CD8-positive, alpha-beta T cell (primary cell): ENCODE measurements at regions of chr2 and their contacts with region 1.

Region 1: GRCh38 chr2:100610381-100610831 is 47.6 kb downstream of the PDCL3 start:
- DNase-seq: peak; percentile 72 to 88 (median 79)
- ATAC-seq: peak; percentile 95
- H3K4me3 ChIP-seq: no peak overlapping the region
- H3K4me3 Mint-ChIP-seq: no peak overlapping the region
- H3K27ac ChIP-seq: no peak overlapping the region
- H3K27ac Mint-ChIP-seq: no peak overlapping the region
- H3K4me1 ChIP-seq: no peaks in the 10 kb centered on the region
- H3K4me1 Mint-ChIP-seq: peaks cover 5% of the 10 kb centered on the region
- H3K27me3 ChIP-seq: no peaks in the 10 kb centered on the region
- H3K27me3 Mint-ChIP-seq: peaks cover 2% of the 10 kb centered on the region
- CTCF ChIP-seq: peak; percentile 75

Region 2: DNA sequence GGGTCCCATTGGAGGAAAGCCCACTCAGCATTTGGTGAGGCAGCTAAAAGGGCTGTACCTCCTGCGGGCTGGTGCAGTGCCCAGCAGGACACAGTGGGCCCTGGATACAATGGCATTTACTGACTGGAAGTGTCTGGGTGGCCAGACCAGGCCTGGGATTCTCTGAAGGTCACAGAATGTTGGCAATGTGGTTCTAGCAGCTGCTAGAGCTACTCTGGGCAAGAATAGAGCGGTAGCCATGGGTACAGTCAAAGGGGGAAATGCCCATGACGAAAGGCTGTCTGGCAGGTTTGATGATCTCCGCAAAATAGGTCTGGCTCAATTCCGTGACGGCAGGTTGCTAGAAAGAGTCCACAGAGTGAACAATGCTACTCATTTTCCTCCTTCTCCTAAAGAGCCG is 709.9 kb before region 1 on chr2:
- CTCF ChIA-PET with region 1: no interaction called
- POLR2A ChIA-PET with region 1: no interaction called
- intact Hi-C with region 1: no loop called
- DNase-seq: no peak
- ATAC-seq: no peak
- H3K4me3 ChIP-seq: no peak overlapping the region
- H3K4me3 Mint-ChIP-seq: no peak overlapping the region
- H3K27ac ChIP-seq: no peak overlapping the region
- H3K27ac Mint-ChIP-seq: no peak overlapping the region
- H3K4me1 ChIP-seq: no peaks in the 10 kb centered on the region
- H3K4me1 Mint-ChIP-seq: no peaks in the 10 kb centered on the region
- H3K27me3 ChIP-seq: no peaks in the 10 kb centered on the region
- H3K27me3 Mint-ChIP-seq: no peaks in the 10 kb centered on the region
- CTCF ChIP-seq: no peak

Region 3: DNA sequence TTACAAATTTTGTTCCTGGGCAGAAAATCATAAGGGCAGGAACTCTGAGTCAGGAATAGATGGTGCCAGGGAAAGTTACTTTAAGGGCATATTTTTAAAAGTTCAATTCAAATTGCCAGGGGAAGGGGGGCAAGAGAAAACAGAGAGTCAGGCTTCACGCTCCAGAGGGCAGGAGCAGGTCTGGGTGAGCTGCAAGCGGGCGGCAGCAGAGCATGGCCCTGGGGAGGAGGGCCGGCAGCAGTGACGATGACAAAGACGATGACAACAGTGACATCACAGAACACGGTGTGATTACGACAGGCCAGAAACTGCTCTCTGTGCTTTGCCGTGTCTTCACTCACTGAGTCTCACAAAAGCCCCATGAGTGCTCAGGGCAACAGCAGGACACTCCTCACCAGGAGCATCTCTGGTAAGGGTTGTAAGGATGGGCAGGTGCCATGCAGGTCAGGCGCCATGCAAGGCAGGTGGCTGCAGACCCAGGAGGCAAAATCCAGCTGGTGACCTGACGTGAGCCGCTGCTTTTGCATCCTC is 216.2 kb before region 1 on chr2:
- CTCF ChIA-PET with region 1: no interaction called
- POLR2A ChIA-PET with region 1: no interaction called
- intact Hi-C with region 1: no loop called
- DNase-seq: peak in 2 of 9 experiments; percentile 25 to 35
- ATAC-seq: no peak
- H3K4me3 ChIP-seq: no peak overlapping the region
- H3K4me3 Mint-ChIP-seq: no peak overlapping the region
- H3K27ac ChIP-seq: no peak overlapping the region
- H3K27ac Mint-ChIP-seq: no peak overlapping the region
- H3K4me1 ChIP-seq: no peaks in the 10 kb centered on the region
- H3K4me1 Mint-ChIP-seq: no peaks in the 10 kb centered on the region
- H3K27me3 ChIP-seq: no peaks in the 10 kb centered on the region
- H3K27me3 Mint-ChIP-seq: no peaks in the 10 kb centered on the region
- CTCF ChIP-seq: no peak

Region 4: DNA sequence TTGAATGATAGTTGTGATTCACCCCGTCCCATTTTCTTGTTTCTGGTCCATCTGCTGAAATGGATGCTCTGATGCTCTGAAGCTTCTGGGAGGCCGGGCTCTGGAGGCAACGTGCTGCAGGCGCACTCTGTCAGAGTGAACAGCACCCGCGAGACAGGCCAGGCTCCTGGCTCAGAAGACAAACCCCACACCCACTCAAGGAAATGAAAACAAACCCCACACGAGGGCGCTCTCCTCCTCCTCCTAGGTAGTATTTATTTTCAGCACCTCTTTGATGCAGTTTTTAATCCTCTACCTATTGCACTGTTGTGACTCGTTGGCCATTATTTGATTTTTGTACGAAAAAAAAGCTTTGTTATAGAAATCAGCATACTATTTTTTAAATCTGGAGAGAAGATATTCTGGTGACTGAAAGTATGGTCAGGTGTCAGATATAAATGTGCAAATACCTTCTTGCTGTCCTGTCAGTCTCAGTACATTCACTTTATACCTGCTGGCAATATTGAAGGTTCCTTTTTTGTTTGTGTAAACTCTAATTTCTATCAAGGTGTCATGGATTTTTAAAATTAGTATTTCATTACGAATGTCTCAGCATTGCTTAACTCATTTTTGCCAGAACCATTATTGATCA is 182.7 kb before region 1 on chr2:
- CTCF ChIA-PET with region 1: no interaction called
- POLR2A ChIA-PET with region 1: no interaction called
- intact Hi-C with region 1: loop called in 1 of 2 experiments (anchors 10 kb)
- DNase-seq: peak; percentile 39 to 77 (median 70)
- ATAC-seq: peak; percentile 83
- H3K4me3 ChIP-seq: no peak overlapping the region
- H3K4me3 Mint-ChIP-seq: no peak overlapping the region
- H3K27ac ChIP-seq: no peak overlapping the region
- H3K27ac Mint-ChIP-seq: no peak overlapping the region
- H3K4me1 ChIP-seq: no peaks in the 10 kb centered on the region
- H3K4me1 Mint-ChIP-seq: peaks cover 4% of the 10 kb centered on the region
- H3K27me3 ChIP-seq: no peaks in the 10 kb centered on the region
- H3K27me3 Mint-ChIP-seq: peaks cover 15% of the 10 kb centered on the region
- CTCF ChIP-seq: peak; percentile 61

Region 5: DNA sequence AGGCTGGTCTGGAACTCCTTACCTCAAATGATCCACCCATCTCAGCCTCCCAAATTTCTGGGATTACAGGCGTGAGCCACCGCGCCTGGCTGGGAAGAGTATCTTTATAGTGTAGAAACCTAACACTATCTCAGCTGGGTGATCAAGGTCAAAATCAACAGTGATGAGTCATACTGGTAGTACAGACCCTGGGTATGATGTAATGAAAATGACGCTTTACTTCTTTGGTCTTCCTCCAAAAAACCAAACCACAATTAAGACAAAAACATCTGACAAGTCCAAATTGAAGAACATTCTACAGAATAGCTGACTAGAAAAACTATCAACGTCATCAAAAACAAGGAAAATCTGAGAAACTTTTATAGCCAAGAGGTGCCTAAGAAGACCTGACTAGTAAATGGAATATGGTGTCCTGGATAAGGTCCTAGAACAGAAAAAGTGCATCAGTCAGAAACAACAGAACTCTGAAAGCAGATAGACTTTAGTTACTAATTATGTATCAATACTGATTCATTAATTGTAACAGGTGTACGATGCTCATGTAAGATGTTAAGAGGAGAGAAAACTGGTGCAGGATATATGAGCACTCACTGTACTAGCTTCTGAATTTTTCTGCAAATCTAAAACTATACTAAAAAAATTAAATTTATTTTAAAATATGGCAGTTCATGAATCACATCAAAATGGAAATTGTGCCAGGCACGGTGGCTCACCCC is 22.2 kb before region 1 on chr2:
- CTCF ChIA-PET with region 1: interaction called, 42 read pairs
- POLR2A ChIA-PET with region 1: no interaction called
- intact Hi-C with region 1: no loop called
- DNase-seq: peak in 5 of 9 experiments; percentile 18 to 89 (median 34)
- ATAC-seq: peak; percentile 88
- H3K4me3 ChIP-seq: no peak overlapping the region
- H3K4me3 Mint-ChIP-seq: no peak overlapping the region
- H3K27ac ChIP-seq: no peak overlapping the region
- H3K27ac Mint-ChIP-seq: peak overlapping the region; percentile 78
- H3K4me1 ChIP-seq: peaks cover 10% of the 10 kb centered on the region
- H3K4me1 Mint-ChIP-seq: peaks cover 20% of the 10 kb centered on the region
- H3K27me3 ChIP-seq: no peaks in the 10 kb centered on the region
- H3K27me3 Mint-ChIP-seq: no peaks in the 10 kb centered on the region
- CTCF ChIP-seq: no peak

Region 6: DNA sequence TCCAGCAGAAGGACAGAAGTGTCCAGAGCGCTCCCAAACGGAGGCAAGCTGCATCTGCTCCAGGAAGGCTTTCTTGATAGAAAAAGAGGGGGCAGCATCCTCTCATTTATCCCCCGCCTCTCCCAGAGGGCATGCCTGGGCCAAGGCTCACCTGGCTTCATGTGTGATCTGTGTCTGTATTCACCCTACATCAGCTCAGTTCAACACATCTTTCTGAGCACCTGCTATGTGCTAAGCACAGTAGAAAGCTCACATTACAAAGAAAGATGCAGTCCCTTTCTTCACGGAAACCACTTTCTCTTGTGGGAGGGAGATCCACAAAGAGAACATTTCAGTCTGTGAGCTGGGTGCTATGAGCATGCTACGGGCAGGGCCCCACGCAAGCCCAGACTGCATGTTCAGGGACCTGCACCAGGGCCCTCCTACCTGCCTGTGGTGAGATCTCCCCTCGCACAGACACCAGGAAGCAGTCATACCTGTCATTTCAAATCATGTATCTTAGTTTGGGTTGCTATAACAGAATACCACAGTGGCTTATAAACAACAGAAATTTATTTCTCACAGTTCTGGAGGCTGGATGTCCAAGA is 43.1 kb after region 1 on chr2:
- CTCF ChIA-PET with region 1: interaction called, 11 read pairs
- POLR2A ChIA-PET with region 1: no interaction called
- intact Hi-C with region 1: no loop called
- DNase-seq: peak in 7 of 9 experiments; percentile 11 to 85 (median 66)
- ATAC-seq: peak; percentile 95
- H3K4me3 ChIP-seq: no peak overlapping the region
- H3K4me3 Mint-ChIP-seq: peak overlapping the region; percentile 49
- H3K27ac ChIP-seq: peak overlapping the region; percentile 10 to 35
- H3K27ac Mint-ChIP-seq: peak overlapping the region; percentile 81
- H3K4me1 ChIP-seq: peaks cover 43% of the 10 kb centered on the region
- H3K4me1 Mint-ChIP-seq: peaks cover 55% of the 10 kb centered on the region
- H3K27me3 ChIP-seq: peaks cover 0 to 3% of the 10 kb centered on the region in 2 experiments
- H3K27me3 Mint-ChIP-seq: no peaks in the 10 kb centered on the region
- CTCF ChIP-seq: no peak

Region 7: DNA sequence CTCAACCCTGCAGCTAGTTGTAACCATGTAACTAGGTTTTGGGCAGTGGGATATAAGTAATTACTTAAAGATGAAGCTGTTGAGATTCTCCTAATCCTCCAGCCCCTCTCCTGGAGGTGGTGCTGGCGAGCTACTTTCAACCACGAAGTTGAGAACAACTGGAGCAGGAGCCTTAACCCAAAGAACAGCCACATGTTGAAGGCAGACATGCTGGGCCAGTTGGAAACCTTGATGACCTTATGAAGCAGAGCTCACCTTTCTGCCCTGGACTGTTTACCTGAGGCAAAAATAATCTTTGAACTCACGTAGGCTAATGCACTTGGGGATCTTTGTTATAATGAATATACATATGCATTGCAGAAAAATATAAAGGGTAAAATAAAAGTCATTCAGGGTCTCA is 119.9 kb after region 1 on chr2:
- CTCF ChIA-PET with region 1: interaction called, 17 read pairs
- POLR2A ChIA-PET with region 1: no interaction called
- intact Hi-C with region 1: loop called (anchors 2 to 5 kb)
- DNase-seq: peak in 6 of 9 experiments; percentile 18 to 57 (median 44)
- ATAC-seq: peak; percentile 55
- H3K4me3 ChIP-seq: no peak overlapping the region
- H3K4me3 Mint-ChIP-seq: no peak overlapping the region
- H3K27ac ChIP-seq: no peak overlapping the region
- H3K27ac Mint-ChIP-seq: no peak overlapping the region
- H3K4me1 ChIP-seq: no peaks in the 10 kb centered on the region
- H3K4me1 Mint-ChIP-seq: peaks cover 2% of the 10 kb centered on the region
- H3K27me3 ChIP-seq: peaks cover 0 to 4% of the 10 kb centered on the region in 2 experiments
- H3K27me3 Mint-ChIP-seq: peaks cover 10% of the 10 kb centered on the region
- CTCF ChIP-seq: peak; percentile 35

Region 8: DNA sequence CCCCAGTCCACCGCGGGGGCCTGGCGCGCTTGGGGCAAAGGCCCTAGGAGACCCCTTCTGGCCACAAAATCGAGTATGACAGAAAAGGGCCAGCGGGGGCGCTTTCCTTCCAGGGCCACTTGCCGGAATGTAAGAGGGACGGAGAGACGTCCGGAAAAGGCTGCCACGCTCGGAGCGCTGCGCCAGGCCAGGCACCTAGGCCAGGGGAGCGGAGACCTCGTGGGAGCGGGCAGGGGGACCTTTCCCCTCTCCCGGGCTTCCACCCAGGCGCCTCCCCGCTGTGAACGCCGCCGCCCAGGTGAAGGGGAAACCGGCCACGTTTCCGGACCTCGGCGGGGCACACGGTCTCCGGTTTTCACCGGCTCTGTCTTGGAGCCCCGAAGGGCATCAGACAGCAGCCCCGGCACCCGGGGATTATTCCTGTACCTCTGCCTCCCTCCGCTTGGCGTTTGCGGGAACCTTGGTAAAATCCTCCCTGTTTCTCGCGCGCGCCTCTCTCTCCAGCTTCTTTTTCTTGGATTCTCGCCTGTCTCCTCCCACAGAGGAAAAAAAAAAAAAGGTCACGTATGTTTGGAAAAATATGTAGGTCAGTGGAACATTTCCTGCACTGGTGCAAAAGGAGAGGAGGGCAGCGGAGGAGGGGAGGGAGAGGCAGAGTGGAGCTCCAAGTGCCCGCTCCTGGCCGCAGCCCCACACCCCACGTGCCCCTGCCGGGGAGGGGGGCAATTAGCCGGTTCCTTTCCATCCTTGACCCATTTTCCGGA is 208.4 kb after region 1 on chr2:
- CTCF ChIA-PET with region 1: interaction called, 4 read pairs
- POLR2A ChIA-PET with region 1: no interaction called
- intact Hi-C with region 1: loop called in 1 of 2 experiments (anchors 10 kb)
- DNase-seq: peak in 4 of 9 experiments; percentile 15 to 54 (median 21)
- ATAC-seq: peak; percentile 16
- H3K4me3 ChIP-seq: peak overlapping the region; percentile 34 to 49
- H3K4me3 Mint-ChIP-seq: peak overlapping the region; percentile 81
- H3K27ac ChIP-seq: no peak overlapping the region
- H3K27ac Mint-ChIP-seq: peak overlapping the region; percentile 43
- H3K4me1 ChIP-seq: peaks cover 23% of the 10 kb centered on the region
- H3K4me1 Mint-ChIP-seq: peaks cover 39% of the 10 kb centered on the region
- H3K27me3 ChIP-seq: no peaks in the 10 kb centered on the region
- H3K27me3 Mint-ChIP-seq: peaks cover 6% of the 10 kb centered on the region
- CTCF ChIP-seq: no peak

Region 9: GRCh38 chr2:100984892-100985379 is 374.5 kb after region 1 on chr2:
- CTCF ChIA-PET with region 1: interaction called, 210 read pairs
- POLR2A ChIA-PET with region 1: interaction called, 3 read pairs
- intact Hi-C with region 1: loop called (anchors 1 kb)
- DNase-seq: peak; percentile 46 to 86 (median 80)
- ATAC-seq: peak; percentile 86
- H3K4me3 ChIP-seq: no peak overlapping the region
- H3K4me3 Mint-ChIP-seq: no peak overlapping the region
- H3K27ac ChIP-seq: no peak overlapping the region
- H3K27ac Mint-ChIP-seq: no peak overlapping the region
- H3K4me1 ChIP-seq: no peaks in the 10 kb centered on the region
- H3K4me1 Mint-ChIP-seq: no peaks in the 10 kb centered on the region
- H3K27me3 ChIP-seq: no peaks in the 10 kb centered on the region
- H3K27me3 Mint-ChIP-seq: no peaks in the 10 kb centered on the region
- CTCF ChIP-seq: peak; percentile 84